Activated CD4-positive, alpha-beta memory T cell treated with anti-CD3 and anti-CD28 coated beads for 36 hours (primary cell): ENCODE measurements at regions of chr18 and their contacts with region 1.

Region 1: DNA sequence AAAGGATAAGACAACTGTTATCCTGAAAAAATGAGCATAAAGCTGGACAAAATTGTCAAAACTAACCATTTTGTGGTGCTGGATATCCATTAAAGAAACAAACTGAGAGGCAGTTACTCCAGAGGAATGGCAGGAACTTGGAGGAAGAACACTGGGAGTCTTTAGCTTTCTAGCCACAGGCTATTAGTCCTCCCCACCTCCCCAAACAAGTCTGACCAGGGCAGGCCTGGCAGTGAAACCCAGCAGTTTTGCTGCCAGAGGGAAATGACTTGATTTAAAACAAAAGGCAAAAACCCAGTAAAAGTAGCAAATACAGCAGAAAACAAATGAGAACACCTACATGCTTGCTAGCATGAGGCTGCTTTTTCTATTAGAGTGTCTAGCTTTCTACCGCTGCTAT is 34.9 kb downstream of the OSBPL1A start:
- DNase-seq: no peak
- H3K4me3 Mint-ChIP-seq: no peak overlapping the region
- H3K27ac Mint-ChIP-seq: no peak overlapping the region
- H3K4me1 Mint-ChIP-seq: no peaks in the 10 kb centered on the region
- H3K27me3 Mint-ChIP-seq: no peaks in the 10 kb centered on the region

Region 2: GRCh38 chr18:24176727-24177416 is 185.9 kb before region 1 on chr18:
- CTCF ChIA-PET with region 1: interaction called, 15 read pairs
- POLR2A ChIA-PET with region 1: no interaction called
- intact Hi-C with region 1: no loop called
- DNase-seq: peak; percentile 64
- H3K4me3 Mint-ChIP-seq: no peak overlapping the region
- H3K27ac Mint-ChIP-seq: no peak overlapping the region
- H3K4me1 Mint-ChIP-seq: peaks cover 4% of the 10 kb centered on the region
- H3K27me3 Mint-ChIP-seq: no peaks in the 10 kb centered on the region

Region 3: GRCh38 chr18:24397694-24398365 is 35.1 kb after region 1 on chr18 and contains the start of gene OSBPL1A:
- CTCF ChIA-PET with region 1: interaction called, 5 read pairs
- POLR2A ChIA-PET with region 1: no interaction called
- intact Hi-C with region 1: loop called (anchors 2 kb)
- DNase-seq: peak; percentile 86
- H3K4me3 Mint-ChIP-seq: peak within 1 kb of the TSS; percentile 72
- H3K27ac Mint-ChIP-seq: no peak within 1 kb of the TSS
- H3K4me1 Mint-ChIP-seq: peaks cover 23% of the 10 kb centered on the region
- H3K27me3 Mint-ChIP-seq: peaks cover 28% of the 10 kb centered on the region
- total RNA-seq, gene OSBPL1A: 1.4 to 2.4 TPM

Region 4: DNA sequence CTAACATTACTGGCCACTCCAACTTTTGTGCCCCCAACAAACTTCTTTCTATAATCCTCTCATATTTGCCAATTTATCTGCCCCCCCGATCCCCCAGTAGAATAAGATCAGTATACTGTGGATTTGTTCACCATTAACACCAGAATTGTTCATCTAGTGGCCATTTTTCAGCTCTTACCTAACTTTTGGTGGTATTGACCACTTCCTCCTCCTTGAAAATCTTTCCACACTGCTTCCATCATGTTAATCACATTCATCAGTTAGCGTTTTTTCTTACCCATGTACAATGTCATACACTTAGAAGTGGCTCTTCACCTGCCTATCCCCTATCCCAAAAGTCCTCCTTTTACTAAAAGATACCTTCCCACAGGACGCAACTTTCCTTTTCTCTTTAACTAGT is 69.9 kb after region 1 on chr18:
- CTCF ChIA-PET with region 1: interaction called, 17 read pairs
- POLR2A ChIA-PET with region 1: no interaction called
- intact Hi-C with region 1: loop called (anchors 5 kb)
- DNase-seq: no peak
- H3K4me3 Mint-ChIP-seq: no peak overlapping the region
- H3K27ac Mint-ChIP-seq: no peak overlapping the region
- H3K4me1 Mint-ChIP-seq: peaks cover 14% of the 10 kb centered on the region
- H3K27me3 Mint-ChIP-seq: no peaks in the 10 kb centered on the region

Region 5: GRCh38 chr18:24726727-24727492 is 364.2 kb after region 1 on chr18:
- CTCF ChIA-PET with region 1: interaction called, 26 read pairs
- POLR2A ChIA-PET with region 1: no interaction called
- intact Hi-C with region 1: loop called (anchors 2 kb)
- DNase-seq: peak; percentile 63
- H3K4me3 Mint-ChIP-seq: no peak overlapping the region
- H3K27ac Mint-ChIP-seq: no peak overlapping the region
- H3K4me1 Mint-ChIP-seq: no peaks in the 10 kb centered on the region
- H3K27me3 Mint-ChIP-seq: no peaks in the 10 kb centered on the region